ENCODE measurements at regions of chr17 and their contacts with region 1.

Region 1: DNA sequence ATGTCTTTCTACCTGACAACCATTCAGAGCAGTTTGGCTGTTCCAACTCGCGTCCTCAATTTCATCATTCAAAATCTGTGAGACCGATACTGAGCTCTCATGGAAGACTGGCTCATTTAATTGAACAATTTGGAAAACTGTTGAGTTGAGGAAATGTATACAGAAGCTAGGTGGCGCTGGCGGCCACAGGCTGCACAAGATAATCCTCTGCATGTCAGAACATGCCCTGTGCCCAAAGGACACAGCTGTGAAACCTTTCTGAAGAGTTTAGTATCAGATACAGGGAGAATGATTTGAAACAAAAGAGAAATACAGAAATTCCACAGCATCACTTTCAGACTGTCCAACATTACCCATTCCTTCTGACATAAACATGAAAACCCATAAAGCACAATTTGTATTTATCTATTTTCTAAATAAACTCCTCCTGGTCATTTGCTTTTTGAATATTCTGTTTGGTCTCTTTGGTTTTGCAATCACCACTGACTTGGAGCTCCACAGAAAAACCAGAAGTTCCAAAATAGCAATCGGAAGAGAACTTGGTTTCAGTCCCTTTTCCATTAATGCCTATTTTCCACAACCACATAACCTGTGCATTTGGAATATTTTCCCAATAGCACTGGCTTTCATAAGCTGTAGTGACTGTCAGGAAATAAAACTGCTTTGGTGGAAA is 192.8 kb downstream of the MAP2K6 start:
- DNase-seq: no peak
- H3K4me3 ChIP-seq: no peak overlapping the region
- H3K27me3 ChIP-seq: no peaks in the 10 kb centered on the region
- CTCF ChIP-seq: peak; percentile 86

Region 2: DNA sequence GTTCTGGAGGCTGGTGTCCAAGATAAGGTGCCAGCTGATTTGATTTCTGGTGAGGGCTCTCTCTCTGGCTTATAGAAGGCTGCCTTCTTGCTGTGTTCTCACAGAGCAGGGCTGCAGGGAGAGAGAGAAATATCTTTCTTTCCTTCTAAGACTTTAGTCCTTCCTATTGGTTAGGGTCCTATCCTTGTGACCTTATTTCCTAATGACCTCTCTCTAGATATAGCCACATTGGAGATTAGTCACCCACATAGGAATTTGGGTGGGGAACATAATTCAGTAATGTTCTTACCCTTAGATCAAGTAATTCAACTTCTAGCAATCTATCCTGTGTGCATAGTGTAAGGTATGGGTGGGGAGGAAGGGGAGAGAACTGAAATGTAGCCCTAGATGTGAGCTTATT is 262.4 kb before region 1 on chr17:
- CTCF ChIA-PET with region 1: no interaction called
- POLR2A ChIA-PET with region 1: no interaction called
- DNase-seq: no peak
- H3K4me3 ChIP-seq: no peak overlapping the region
- H3K27me3 ChIP-seq: no peaks in the 10 kb centered on the region
- CTCF ChIP-seq: no peak

Region 3: DNA sequence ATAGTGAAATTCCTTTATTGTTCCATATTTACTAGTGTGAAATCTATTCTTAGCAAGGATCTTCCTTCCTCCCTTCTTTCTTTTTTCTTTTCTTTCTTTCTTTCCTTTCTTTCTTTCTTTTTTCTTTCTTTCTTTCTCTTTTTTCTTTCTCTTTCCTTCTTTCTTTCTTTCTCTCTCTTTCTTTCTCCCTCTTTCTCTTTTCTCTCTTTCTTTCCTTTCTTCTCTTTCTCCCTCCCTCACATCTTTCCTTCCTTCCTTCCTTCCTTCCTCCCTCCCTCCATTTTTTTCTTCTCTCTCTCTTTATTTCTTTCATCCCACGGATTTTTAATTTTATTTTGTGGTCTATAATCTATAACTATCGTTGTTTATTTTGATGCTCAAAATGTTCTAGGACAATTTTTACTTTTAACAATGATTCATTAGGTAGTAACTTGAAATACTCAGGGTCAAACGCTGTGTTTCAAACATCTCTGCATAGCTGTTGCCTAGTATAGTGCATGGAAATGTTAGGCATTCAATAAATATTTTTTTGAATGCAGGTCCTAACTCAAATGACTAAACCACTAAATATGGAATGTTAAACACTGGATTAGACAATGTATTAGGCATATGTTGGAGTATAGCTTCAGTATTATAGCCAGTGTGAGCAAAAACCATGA is 14.5 kb before region 1 on chr17:
- CTCF ChIA-PET with region 1: interaction called, 18 read pairs
- POLR2A ChIA-PET with region 1: no interaction called
- DNase-seq: no peak
- H3K4me3 ChIP-seq: no peak overlapping the region
- H3K27me3 ChIP-seq: no peaks in the 10 kb centered on the region
- CTCF ChIP-seq: no peak

Region 4: DNA sequence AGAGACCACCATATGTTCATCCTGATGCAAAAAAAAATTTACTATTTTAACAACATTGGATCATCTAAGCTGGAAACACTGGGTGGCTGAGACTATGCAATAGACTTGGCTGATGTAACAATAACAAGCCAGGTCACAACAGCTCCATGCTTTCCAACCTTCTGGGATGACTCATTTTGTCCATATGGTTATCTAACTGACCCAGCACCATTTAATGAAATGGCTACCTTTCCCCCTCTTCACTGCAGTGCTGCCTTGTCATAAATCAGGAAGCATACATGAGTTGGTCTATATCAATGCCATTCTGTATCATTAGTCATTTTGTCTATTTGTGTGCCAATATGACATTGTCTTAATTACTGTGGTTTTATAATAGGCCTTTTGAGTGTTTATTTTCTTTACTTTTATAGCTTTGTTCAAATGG is 250.1 kb after region 1 on chr17:
- CTCF ChIA-PET with region 1: interaction called, 11 read pairs
- POLR2A ChIA-PET with region 1: no interaction called
- DNase-seq: peak; percentile 80
- H3K4me3 ChIP-seq: no peak overlapping the region
- H3K27me3 ChIP-seq: no peaks in the 10 kb centered on the region
- CTCF ChIP-seq: no peak

Region 5: GRCh38 chr17:70138291-70138865 is 531.1 kb after region 1 on chr17:
- CTCF ChIA-PET with region 1: interaction called, 20 read pairs
- POLR2A ChIA-PET with region 1: no interaction called
- DNase-seq: peak; percentile 14
- H3K4me3 ChIP-seq: no peak overlapping the region
- H3K27me3 ChIP-seq: no peaks in the 10 kb centered on the region
- CTCF ChIP-seq: no peak

Region 6: GRCh38 chr17:70168977-70169708 is 561.8 kb after region 1 on chr17 and contains the start of gene KCNJ2:
- CTCF ChIA-PET with region 1: interaction called, 10 read pairs
- POLR2A ChIA-PET with region 1: interaction called, 7 read pairs
- DNase-seq: peak; percentile 26
- H3K4me3 ChIP-seq: peak within 1 kb of the TSS; percentile 49
- H3K27me3 ChIP-seq: no peaks in the 10 kb centered on the region; the same call in 1 of the 2 replicates
- CTCF ChIP-seq: no peak
- polyA plus RNA-seq, gene KCNJ2: 1.2 and 2.1 TPM in 2 replicates

Measured in BJ (cell line).